ENCODE measurements at regions of chr10 and their contacts with region 1.

Region 1: DNA sequence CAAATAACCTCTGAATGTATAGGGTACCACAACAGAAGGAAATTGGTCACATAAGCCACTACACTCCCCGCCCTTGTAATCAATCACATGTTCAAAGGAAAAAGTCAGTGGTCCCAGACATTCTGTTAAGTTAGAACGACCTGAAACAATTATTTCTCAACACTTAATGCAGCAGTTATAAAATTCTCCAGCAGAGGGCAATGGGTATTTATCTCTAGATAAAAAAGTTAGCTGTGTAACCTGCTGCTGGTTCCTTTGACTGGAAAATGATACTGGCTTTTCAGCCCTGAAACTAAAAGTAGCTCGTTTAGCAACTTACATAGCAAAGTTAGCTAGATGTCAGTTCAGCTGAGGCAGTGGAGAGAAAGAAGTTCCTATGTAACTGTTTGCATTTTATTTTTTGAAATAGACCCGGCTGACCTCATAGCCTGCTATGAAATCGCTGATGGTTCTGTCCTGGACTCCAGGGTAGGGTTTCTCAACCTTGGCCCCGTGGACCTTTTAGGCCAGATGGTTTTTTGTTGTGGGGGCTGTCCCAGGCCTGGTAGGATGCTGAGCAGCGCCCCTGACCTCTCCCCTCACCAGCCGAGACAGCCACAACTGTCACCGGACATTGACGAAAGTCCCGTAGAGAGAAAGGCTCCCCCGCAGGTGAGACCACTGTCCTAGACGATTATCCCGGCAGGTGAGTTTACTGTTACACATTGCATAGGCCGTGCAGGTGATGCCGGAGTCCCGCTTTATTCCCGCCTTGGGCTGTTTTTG is 40.2 kb upstream of the PROSER2 start:
- DNase-seq: peak; percentile 32
- H3K4me3 ChIP-seq: no peak overlapping the region
- H3K27ac ChIP-seq: no peak overlapping the region
- H3K4me1 ChIP-seq: peaks cover 0 to 7% (median 0%) of the 10 kb centered on the region in 6 donors
- H3K27me3 ChIP-seq: no peaks in the 10 kb centered on the region
- CTCF ChIP-seq: peak; percentile 26 to 76 (median 69)
- POLR2A ChIP-seq: no peak

Region 2: GRCh38 chr10:11209830-11210181 is 573.2 kb before region 1 on chr10:
- intact Hi-C with region 1: no loop called
- DNase-seq: no peak
- H3K4me3 ChIP-seq: peak overlapping the region in 1 of 8 donors; percentile 8
- H3K27ac ChIP-seq: peak overlapping the region in 7 of 8 donors; percentile 8 to 64 (median 53)
- H3K4me1 ChIP-seq: peaks cover 38 to 100% (median 96%) of the 10 kb centered on the region in 6 donors
- H3K27me3 ChIP-seq: no peaks in the 10 kb centered on the region
- CTCF ChIP-seq: no peak
- POLR2A ChIP-seq: no peak

Region 3: GRCh38 chr10:11539191-11539868 is 243.6 kb before region 1 on chr10:
- intact Hi-C with region 1: no loop called
- DNase-seq: no peak
- H3K4me3 ChIP-seq: no peak overlapping the region
- H3K27ac ChIP-seq: peak overlapping the region in 4 of 8 donors; percentile 10 to 59 (median 23)
- H3K4me1 ChIP-seq: peaks cover 8 to 88% (median 39%) of the 10 kb centered on the region in 6 donors
- H3K27me3 ChIP-seq: no peaks in the 10 kb centered on the region
- CTCF ChIP-seq: no peak
- POLR2A ChIP-seq: no peak

Region 4: GRCh38 chr10:11595395-11595692 is 187.6 kb before region 1 on chr10:
- intact Hi-C with region 1: no loop called
- DNase-seq: no peak
- H3K4me3 ChIP-seq: peak overlapping the region in 1 of 8 donors; percentile 21
- H3K27ac ChIP-seq: peak overlapping the region; percentile 22 to 86 (median 68)
- H3K4me1 ChIP-seq: peaks cover 15 to 95% (median 59%) of the 10 kb centered on the region in 6 donors
- H3K27me3 ChIP-seq: no peaks in the 10 kb centered on the region
- CTCF ChIP-seq: no peak
- POLR2A ChIP-seq: no peak

Region 5: GRCh38 chr10:11934262-11934661 is 151.3 kb after region 1 on chr10:
- intact Hi-C with region 1: no loop called
- DNase-seq: no peak
- H3K4me3 ChIP-seq: no peak overlapping the region
- H3K27ac ChIP-seq: no peak overlapping the region
- H3K4me1 ChIP-seq: no peaks in the 10 kb centered on the region
- H3K27me3 ChIP-seq: no peaks in the 10 kb centered on the region
- CTCF ChIP-seq: no peak
- POLR2A ChIP-seq: no peak

Region 6: DNA sequence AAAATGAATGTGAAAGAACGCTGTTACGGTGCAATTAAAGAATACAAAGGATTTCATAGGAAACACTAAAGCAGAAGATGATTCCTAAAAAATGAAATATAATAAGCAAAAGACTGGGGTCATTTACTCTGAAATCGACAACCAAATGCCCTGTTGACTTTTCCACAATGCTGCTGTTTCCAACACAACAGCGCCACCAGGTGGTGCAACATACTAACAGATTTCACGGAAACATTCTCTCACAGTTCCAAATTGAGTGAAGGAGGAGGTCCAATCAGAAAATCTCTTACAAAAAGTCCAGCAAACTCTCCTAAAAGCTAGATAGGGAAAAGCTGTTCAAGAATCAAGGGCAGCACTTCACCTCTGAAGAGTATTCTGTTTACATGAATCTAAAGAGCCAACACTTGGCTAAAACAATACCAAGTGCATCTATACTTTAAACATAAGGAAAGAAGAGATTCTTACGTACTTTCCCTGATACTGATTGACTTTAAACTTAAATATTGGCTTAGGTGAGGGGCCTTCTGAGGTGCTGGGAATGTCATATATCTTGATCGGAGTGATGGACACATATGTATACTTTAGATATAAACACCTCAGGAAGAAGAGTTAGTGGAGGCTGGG is 203.7 kb after region 1 on chr10:
- intact Hi-C with region 1: loop called (anchors 5 kb)
- DNase-seq: peak; percentile 84
- H3K4me3 ChIP-seq: no peak overlapping the region
- H3K27ac ChIP-seq: no peak overlapping the region
- H3K4me1 ChIP-seq: peaks cover 0 to 13% (median 7%) of the 10 kb centered on the region in 6 donors
- H3K27me3 ChIP-seq: no peaks in the 10 kb centered on the region
- CTCF ChIP-seq: peak in 10 of 11 experiments; percentile 43 to 83 (median 79)
- POLR2A ChIP-seq: no peak